Natural killer cell (primary cell): ENCODE measurements at regions of chr19 and their contacts with region 1.

Region 1: DNA sequence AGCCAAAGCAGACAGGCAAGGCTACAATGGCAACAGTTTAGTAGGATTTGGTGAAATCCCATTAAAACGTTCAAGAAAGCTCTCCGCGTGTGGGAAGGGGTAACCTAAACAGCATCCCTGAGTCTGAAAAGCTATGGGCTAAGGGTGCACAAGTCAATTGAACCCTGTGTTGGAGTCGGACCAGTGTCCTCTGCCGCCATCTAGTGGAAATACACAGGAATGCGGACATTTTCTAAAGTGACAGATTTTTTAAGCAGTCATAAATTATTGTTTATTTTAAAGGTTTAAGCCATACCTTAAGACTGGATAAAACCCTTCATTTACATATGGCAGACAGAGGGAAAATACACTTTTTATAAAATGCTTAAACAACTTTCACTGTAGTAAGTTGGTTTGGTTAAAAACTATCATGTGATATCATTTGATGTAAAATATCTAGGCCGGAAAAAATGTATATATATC is 26.5 kb upstream of the LSM14A start:
- DNase-seq: peak; percentile 23 to 83
- ATAC-seq: peak; percentile 79 to 84 (median 81)
- H3K4me3 ChIP-seq: no peak overlapping the region
- H3K4me3 Mint-ChIP-seq: no peak overlapping the region
- H3K27ac ChIP-seq: no peak overlapping the region
- H3K27ac Mint-ChIP-seq: no peak overlapping the region
- H3K4me1 ChIP-seq: no peaks in the 10 kb centered on the region
- H3K4me1 Mint-ChIP-seq: no peaks in the 10 kb centered on the region
- H3K27me3 ChIP-seq: no peaks in the 10 kb centered on the region
- H3K27me3 Mint-ChIP-seq: no peaks in the 10 kb centered on the region
- CTCF ChIP-seq: peak; percentile 85

Region 2: GRCh38 chr19:33778089-33778791 is 367.5 kb before region 1 on chr19:
- intact Hi-C with region 1: loop called (anchors 5 kb)
- DNase-seq: peak; percentile 81 to 91
- ATAC-seq: peak; percentile 92 to 100 (median 99)
- H3K4me3 ChIP-seq: no peak overlapping the region
- H3K4me3 Mint-ChIP-seq: no peak overlapping the region
- H3K27ac ChIP-seq: no peak overlapping the region
- H3K27ac Mint-ChIP-seq: no peak overlapping the region
- H3K4me1 ChIP-seq: peaks cover 3% of the 10 kb centered on the region
- H3K4me1 Mint-ChIP-seq: peaks cover 0 to 21% of the 10 kb centered on the region in 2 donors
- H3K27me3 ChIP-seq: no peaks in the 10 kb centered on the region
- H3K27me3 Mint-ChIP-seq: peaks cover 30% of the 10 kb centered on the region in 2 donors
- CTCF ChIP-seq: peak; percentile 100

Region 3: DNA sequence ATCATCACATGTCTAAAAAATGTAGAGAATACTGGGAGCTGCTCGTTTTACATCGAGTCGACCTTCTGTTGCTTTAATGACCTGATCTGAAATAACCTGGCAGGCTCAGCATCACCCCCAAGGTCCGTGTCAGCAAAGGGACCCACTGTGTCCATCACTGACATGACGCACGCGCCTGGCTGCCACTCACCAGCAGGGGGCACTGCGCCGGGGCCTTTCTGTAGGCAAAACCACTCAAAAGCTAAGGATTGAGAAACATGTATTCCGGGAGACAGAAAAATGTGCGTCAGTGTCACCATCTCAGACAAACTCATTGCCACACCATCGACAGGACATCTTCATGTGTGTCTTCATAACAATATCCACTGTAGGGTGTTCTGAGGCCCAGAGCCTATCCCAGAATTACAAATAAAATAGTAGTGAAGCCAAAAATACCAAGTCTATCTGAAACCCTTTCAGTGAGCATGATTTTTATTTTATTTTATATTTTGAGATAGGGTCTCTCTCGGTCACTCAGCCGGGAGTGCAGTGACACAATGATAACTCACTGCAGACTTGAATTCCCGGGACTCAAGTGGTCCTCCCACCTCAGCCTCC is 103.7 kb before region 1 on chr19:
- intact Hi-C with region 1: loop called (anchors 1 kb)
- DNase-seq: peak; percentile 62 to 72
- ATAC-seq: peak; percentile 47 to 70 (median 69)
- H3K4me3 ChIP-seq: no peak overlapping the region
- H3K4me3 Mint-ChIP-seq: no peak overlapping the region
- H3K27ac ChIP-seq: no peak overlapping the region
- H3K27ac Mint-ChIP-seq: no peak overlapping the region
- H3K4me1 ChIP-seq: no peaks in the 10 kb centered on the region
- H3K4me1 Mint-ChIP-seq: no peaks in the 10 kb centered on the region
- H3K27me3 ChIP-seq: no peaks in the 10 kb centered on the region
- H3K27me3 Mint-ChIP-seq: peaks cover 0 to 14% of the 10 kb centered on the region in 2 donors
- CTCF ChIP-seq: peak; percentile 91

Region 4: DNA sequence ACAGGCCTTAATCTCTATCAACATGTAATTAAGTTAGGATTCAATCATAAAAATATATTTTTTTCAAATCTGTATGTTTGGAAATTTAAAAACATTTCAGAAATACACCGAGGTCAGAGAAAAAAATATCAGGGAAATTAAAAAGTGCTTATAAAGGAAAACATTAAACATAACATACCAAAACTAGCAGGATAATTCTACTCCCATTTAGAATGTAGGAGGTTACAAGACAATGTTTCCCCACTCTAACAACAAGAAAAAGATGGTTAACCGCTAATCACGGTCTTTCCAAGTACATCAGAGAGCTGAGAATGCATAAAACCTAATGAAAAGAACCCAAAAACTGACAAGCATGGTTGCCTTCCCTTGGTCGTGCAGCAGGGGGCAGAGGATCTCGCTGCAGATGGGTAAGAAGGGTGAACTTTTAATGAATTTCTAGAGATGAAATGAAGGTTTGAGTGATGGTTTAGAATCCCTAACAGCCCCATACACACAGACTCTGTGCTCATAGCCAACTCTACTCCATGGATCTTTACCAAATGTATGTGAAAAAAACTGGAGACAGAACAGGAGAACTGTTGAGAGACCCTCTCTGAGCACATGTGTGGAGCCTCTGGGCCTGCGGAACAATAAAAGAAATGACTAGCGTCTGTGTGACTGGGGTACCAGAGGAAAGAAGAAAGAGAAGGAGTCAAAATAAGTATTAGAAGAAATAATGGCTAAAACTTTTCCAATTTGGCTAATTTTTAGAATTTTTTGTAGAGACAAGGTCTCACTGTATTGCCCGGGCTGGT is 24.7 kb before region 1 on chr19:
- intact Hi-C with region 1: loop called (anchors 1 kb)
- DNase-seq: peak; percentile 30 to 75
- ATAC-seq: peak; percentile 27 to 66 (median 55)
- H3K4me3 ChIP-seq: no peak overlapping the region
- H3K4me3 Mint-ChIP-seq: no peak overlapping the region
- H3K27ac ChIP-seq: no peak overlapping the region
- H3K27ac Mint-ChIP-seq: no peak overlapping the region
- H3K4me1 ChIP-seq: no peaks in the 10 kb centered on the region
- H3K4me1 Mint-ChIP-seq: no peaks in the 10 kb centered on the region
- H3K27me3 ChIP-seq: no peaks in the 10 kb centered on the region
- H3K27me3 Mint-ChIP-seq: peaks cover 20 to 28% of the 10 kb centered on the region in 2 donors
- CTCF ChIP-seq: peak; percentile 57

Region 5: GRCh38 chr19:34327851-34328250 is 182.1 kb after region 1 on chr19:
- intact Hi-C with region 1: no loop called
- DNase-seq: no peak
- ATAC-seq: no peak
- H3K4me3 ChIP-seq: no peak overlapping the region
- H3K4me3 Mint-ChIP-seq: no peak overlapping the region
- H3K27ac ChIP-seq: no peak overlapping the region
- H3K27ac Mint-ChIP-seq: no peak overlapping the region
- H3K4me1 ChIP-seq: no peaks in the 10 kb centered on the region
- H3K4me1 Mint-ChIP-seq: no peaks in the 10 kb centered on the region
- H3K27me3 ChIP-seq: no peaks in the 10 kb centered on the region
- H3K27me3 Mint-ChIP-seq: no peaks in the 10 kb centered on the region
- CTCF ChIP-seq: no peak